ENCODE measurements at regions of chr18 and their contacts with region 1.

Region 1: DNA sequence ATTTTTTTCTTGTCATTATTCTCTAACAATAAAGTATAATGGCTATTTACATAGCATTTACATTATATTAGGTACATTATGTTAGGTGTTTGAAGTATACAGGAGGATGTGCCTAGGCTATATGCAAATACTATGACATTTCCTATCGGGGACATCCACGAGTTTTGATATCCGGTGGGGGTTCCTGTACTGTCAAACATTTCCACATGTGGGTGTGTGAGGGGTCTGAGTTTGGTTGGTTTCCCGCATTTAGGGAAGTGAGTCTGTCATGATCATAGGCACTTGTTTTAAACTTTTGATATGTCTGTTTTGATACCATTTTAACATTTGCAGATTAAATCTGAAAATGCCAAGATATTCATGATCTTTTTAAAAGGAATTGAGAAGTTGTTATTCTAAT is 76.0 kb downstream of the CEP192 start:
- DNase-seq: no peak
- ATAC-seq: peak; percentile 72
- H3K4me3 Mint-ChIP-seq: no peak overlapping the region
- H3K27ac Mint-ChIP-seq: peak overlapping the region; percentile 69
- H3K4me1 Mint-ChIP-seq: peaks cover 28% of the 10 kb centered on the region
- H3K27me3 Mint-ChIP-seq: no peaks in the 10 kb centered on the region
- CTCF ChIP-seq: no peak

Region 2: DNA sequence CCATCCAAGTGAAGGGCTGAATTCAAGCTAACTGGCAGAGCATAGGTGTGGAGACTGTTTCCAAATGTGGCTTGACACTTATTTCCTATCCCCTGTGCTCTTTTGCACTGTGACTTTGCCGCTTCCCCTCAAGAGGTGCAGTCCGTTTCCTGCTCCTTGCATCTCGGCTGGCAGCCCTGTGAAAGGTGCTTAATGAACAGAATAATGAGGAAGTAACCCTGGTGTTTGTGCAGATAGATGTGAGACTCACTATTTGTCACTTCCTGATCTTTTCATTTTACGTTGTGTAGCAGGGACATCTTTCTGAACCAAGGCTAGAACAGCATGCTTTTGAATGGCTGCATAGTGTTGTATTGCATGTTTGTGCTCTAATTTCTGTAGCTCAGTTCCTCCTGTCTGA is 15.2 kb before region 1 on chr18:
- CTCF ChIA-PET with region 1: no interaction called
- POLR2A ChIA-PET with region 1: no interaction called
- intact Hi-C with region 1: loop called (anchors 1 kb)
- DNase-seq: peak; percentile 19
- ATAC-seq: peak; percentile 96
- H3K4me3 Mint-ChIP-seq: peak overlapping the region; percentile 56
- H3K27ac Mint-ChIP-seq: peak overlapping the region; percentile 91
- H3K4me1 Mint-ChIP-seq: peaks cover 21% of the 10 kb centered on the region
- H3K27me3 Mint-ChIP-seq: no peaks in the 10 kb centered on the region
- CTCF ChIP-seq: no peak

Region 3: DNA sequence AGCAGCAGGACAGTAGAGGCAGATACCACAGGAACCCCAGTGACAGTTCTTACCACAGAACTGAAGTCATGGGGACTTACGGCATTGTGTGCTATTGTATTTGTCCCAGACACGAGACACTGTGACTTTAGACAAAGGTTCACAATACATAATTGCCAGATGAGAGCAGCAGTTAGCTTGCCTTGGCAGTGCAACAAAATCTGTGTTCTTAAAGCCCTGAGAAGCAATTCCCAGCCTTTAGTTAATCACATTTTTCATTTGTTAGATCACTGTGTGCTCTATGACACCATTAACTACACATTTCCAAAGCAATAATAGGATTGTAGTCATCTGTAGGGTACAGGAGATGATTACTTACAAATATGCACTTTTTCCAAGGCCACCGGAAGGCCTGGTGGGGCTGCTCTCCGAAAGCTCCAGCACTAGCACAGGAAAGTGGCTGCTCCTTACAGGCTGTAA is 53.9 kb after region 1 on chr18:
- CTCF ChIA-PET with region 1: no interaction called
- POLR2A ChIA-PET with region 1: no interaction called
- intact Hi-C with region 1: no loop called
- DNase-seq: no peak
- ATAC-seq: no peak
- H3K4me3 Mint-ChIP-seq: no peak overlapping the region
- H3K27ac Mint-ChIP-seq: no peak overlapping the region
- H3K4me1 Mint-ChIP-seq: peaks cover 8% of the 10 kb centered on the region
- H3K27me3 Mint-ChIP-seq: no peaks in the 10 kb centered on the region
- CTCF ChIP-seq: no peak

Region 4: DNA sequence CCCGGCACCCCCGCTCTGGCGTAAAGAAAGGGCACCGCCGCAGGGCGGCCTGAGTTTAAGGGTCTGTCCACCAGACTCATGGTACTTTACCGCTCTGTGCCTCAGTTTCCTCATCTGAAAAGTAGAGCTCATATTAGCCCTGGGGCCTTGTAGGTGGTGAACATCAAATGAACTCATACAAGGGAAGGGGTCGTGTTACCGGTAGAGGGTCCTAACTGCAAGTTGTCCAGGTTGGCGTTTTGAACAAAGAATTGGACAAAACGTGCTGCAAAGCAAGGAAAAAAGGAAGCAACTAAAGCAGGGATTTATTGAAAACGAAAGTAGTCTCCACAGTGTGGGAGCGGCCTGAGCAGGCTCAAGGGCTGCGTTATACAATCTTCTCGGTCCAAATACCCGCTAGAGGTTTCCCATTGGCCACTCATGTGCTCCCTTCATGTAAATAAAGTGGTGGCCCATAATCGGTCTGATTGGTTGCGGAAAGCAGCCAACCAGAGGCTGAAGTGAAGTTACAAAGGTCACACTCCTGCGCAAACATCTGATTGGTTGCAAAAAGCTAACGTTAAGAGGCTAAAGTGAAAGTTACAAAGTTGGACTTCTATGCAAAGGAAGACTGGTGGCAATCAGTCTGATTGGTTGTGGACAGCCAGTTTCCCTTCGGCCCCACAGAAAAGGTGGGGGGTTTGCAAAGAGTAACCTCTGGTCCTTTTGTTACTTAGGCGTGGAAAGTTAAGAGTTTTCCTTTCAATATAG is 70.7 kb after region 1 on chr18:
- CTCF ChIA-PET with region 1: no interaction called
- POLR2A ChIA-PET with region 1: no interaction called
- intact Hi-C with region 1: loop called (anchors 2 kb)
- DNase-seq: peak; percentile 43
- ATAC-seq: peak; percentile 87
- H3K4me3 Mint-ChIP-seq: peak overlapping the region; percentile 98
- H3K27ac Mint-ChIP-seq: peak overlapping the region; percentile 97
- H3K4me1 Mint-ChIP-seq: peaks cover 23% of the 10 kb centered on the region
- H3K27me3 Mint-ChIP-seq: no peaks in the 10 kb centered on the region
- CTCF ChIP-seq: no peak

Measured in activated B cell treated with CpG ODN at 0.5 μM for 24 hours (primary cell).